MCF 10A (cell line): ENCODE measurements at regions of chr1 and their contacts with region 1.

Region 1: GRCh38 chr1:23496490-23497181 is 12.7 kb upstream of the ASAP3 start:
- DNase-seq: no peak
- H3K4me3 Mint-ChIP-seq: no peak overlapping the region
- H3K27ac Mint-ChIP-seq: no peak overlapping the region
- H3K4me1 Mint-ChIP-seq: no peaks in the 10 kb centered on the region
- H3K27me3 Mint-ChIP-seq: peaks cover 5% of the 10 kb centered on the region
- CTCF ChIP-seq: no peak

Region 2: GRCh38 chr1:21520899-21521716 is 1975.5 kb before region 1 on chr1:
- CTCF ChIA-PET with region 1: interaction called, 12 read pairs
- POLR2A ChIA-PET with region 1: no interaction called
- intact Hi-C with region 1: no loop called
- DNase-seq: no peak
- H3K4me3 Mint-ChIP-seq: no peak overlapping the region
- H3K27ac Mint-ChIP-seq: no peak overlapping the region
- H3K4me1 Mint-ChIP-seq: no peaks in the 10 kb centered on the region
- H3K27me3 Mint-ChIP-seq: no peaks in the 10 kb centered on the region
- CTCF ChIP-seq: no peak

Region 3: DNA sequence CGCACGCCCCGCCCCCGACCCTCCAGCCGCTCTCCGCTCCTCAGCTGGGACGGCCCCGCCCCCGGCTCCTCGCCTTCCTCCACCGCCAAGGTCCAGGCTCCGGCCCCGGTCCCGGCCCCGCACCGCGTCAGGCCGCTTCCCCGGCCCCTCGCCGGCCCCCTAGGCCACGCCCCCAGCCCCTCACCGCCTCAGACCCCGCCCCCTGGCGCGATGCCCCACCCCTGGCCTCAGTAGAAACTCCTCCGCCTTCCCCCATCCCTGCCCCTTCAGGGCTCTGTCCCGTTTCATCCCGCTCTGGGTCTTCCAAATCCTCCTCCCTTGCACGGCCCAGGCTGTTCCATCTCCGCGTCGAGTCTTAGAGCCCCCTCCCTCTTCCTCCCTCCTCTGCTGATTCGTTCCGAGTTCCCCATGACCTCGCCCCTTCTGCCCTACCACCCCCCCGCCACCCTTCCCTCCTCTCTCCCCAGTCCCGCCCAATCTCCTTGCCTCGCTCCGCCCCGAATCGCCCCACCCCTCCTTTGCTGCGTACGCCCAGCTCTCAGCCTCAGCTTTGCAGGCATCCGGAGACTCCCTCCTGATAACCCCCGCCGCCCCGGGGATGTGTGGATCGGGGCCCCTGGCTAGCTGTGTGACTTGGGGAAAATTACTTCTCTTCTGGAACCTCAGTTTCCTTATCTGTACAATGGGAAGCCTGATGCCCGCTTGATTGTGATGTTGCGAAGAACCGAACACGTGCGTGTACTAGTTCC is 12.2 kb before region 1 on chr1:
- CTCF ChIA-PET with region 1: interaction called, 46 read pairs
- POLR2A ChIA-PET with region 1: interaction called, 4 read pairs
- intact Hi-C with region 1: no loop called
- DNase-seq: peak; percentile 90
- H3K4me3 Mint-ChIP-seq: peak overlapping the region; percentile 76
- H3K27ac Mint-ChIP-seq: no peak overlapping the region
- H3K4me1 Mint-ChIP-seq: peaks cover 15% of the 10 kb centered on the region
- H3K27me3 Mint-ChIP-seq: no peaks in the 10 kb centered on the region
- CTCF ChIP-seq: no peak

Region 4: DNA sequence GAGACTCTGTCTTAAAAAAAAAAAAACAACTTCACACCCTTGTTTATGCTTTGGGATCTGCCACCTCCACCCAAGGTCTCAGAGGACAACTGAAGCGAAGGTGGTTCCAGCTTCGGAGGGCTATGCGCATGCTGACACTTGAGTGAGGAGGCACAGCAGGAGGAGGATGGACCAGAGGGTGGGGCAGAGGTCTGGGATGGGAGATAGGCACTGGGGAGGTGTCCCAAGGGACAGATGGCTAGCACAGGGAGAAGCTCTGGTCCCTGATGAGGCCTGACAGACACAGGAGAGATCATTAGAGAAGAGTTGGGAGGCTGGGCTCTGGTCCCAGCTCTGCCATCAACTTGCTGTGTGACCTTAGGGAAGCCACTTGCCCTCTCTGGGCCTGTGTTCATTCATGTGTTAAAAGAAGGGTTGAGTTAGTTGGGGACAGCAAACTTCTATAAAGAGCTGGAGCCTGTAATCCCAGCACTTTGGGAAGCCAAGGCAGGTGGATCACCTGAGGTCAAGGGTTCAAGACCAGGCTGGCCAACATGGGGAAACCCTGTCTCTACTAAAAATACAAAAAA is 17.6 kb after region 1 on chr1:
- CTCF ChIA-PET with region 1: interaction called, 23 read pairs
- POLR2A ChIA-PET with region 1: interaction called, 3 read pairs
- intact Hi-C with region 1: no loop called
- DNase-seq: no peak
- H3K4me3 Mint-ChIP-seq: no peak overlapping the region
- H3K27ac Mint-ChIP-seq: no peak overlapping the region
- H3K4me1 Mint-ChIP-seq: no peaks in the 10 kb centered on the region
- H3K27me3 Mint-ChIP-seq: no peaks in the 10 kb centered on the region
- CTCF ChIP-seq: no peak

Region 5: GRCh38 chr1:23530747-23531561 is 34.3 kb after region 1 on chr1 and contains the start of gene E2F2:
- CTCF ChIA-PET with region 1: interaction called, 178 read pairs
- POLR2A ChIA-PET with region 1: interaction called, 6 read pairs
- intact Hi-C with region 1: no loop called
- DNase-seq: peak; percentile 88
- H3K4me3 Mint-ChIP-seq: peak within 1 kb of the TSS; percentile 75
- H3K27ac Mint-ChIP-seq: no peak within 1 kb of the TSS
- H3K4me1 Mint-ChIP-seq: peaks cover 29% of the 10 kb centered on the region
- H3K27me3 Mint-ChIP-seq: no peaks in the 10 kb centered on the region
- CTCF ChIP-seq: no peak
- total RNA-seq, gene E2F2: 0.32 and 0.89 TPM in 2 replicates

Region 6: GRCh38 chr1:23643736-23644554 is 147.3 kb after region 1 on chr1:
- CTCF ChIA-PET with region 1: interaction called, 12 read pairs
- POLR2A ChIA-PET with region 1: no interaction called
- intact Hi-C with region 1: no loop called
- DNase-seq: no peak
- H3K4me3 Mint-ChIP-seq: no peak overlapping the region
- H3K27ac Mint-ChIP-seq: no peak overlapping the region
- H3K4me1 Mint-ChIP-seq: no peaks in the 10 kb centered on the region
- H3K27me3 Mint-ChIP-seq: no peaks in the 10 kb centered on the region
- CTCF ChIP-seq: no peak